GM18951 (cell line): ENCODE measurements at regions of chr15 and their contacts with region 1.

Region 1: DNA sequence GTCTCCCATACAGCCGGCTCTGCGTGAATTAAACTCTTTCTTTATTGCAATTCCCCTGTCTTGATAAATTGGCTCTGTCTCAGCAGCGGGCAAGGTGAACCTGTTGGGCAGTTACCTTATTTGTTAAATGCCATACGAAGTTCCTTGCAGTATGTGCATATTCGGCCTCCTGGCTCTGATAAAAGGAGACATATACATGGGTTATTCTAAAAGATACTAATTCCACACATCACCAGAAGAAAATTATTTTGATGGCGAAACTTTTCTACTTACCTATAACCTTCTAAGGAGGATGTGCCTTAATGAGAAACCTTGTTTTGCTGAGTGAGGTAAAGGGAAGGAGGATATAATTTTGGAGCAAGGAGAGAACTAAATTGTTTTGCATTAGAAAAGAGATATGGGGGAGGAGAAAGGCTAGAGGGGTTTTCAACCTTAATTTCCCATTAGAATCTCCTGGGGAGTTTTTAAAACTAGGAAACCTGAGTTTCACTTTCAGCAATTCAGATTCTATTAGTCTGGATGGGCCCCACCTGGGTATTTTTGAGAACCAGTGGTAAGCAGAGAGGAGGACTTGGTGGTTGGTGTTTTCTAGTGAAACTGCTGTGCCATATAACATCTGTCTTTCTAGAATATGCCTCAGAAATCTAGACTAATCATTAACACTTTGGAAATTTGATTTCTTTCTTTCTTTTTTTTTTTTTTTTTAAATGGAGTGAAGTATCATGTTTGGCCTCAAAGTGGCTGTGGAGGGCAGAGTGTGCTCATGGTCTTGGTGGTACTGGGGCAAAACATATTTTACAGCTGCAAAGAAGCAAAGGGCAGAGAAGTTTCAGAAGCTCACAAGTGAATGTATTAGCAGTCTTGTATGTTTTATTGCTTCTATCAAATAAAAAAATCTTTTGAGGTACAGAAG is 23.0 kb downstream of the NANOGP8 start:
- POLR2A ChIP-seq: no peak

Region 2: DNA sequence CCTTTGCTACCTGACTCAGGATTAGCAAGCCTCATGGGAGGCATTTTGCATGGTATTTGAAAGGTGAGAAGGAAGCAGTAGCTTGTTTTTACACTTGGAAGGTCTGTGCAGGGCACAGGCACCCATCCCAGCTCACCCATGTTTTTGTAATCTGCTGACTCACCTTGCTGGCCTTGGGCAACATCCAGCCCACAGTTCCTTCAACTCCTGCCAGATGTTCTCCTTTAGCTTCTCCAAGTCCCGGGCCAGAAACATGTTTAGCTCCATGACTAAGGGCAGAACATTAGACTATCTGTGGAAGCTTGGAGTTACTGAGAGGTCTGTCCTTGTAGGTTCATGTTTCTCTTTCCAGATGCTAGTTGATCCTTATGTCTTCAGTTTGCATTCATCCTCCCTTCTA is 61.6 kb before region 1 on chr15:
- in situ Hi-C with region 1: no loop called
- POLR2A ChIP-seq: no peak

Region 3: GRCh38 chr15:35019386-35020083 is 42.5 kb before region 1 on chr15:
- in situ Hi-C with region 1: no loop called
- POLR2A ChIP-seq: no peak

Region 4: DNA sequence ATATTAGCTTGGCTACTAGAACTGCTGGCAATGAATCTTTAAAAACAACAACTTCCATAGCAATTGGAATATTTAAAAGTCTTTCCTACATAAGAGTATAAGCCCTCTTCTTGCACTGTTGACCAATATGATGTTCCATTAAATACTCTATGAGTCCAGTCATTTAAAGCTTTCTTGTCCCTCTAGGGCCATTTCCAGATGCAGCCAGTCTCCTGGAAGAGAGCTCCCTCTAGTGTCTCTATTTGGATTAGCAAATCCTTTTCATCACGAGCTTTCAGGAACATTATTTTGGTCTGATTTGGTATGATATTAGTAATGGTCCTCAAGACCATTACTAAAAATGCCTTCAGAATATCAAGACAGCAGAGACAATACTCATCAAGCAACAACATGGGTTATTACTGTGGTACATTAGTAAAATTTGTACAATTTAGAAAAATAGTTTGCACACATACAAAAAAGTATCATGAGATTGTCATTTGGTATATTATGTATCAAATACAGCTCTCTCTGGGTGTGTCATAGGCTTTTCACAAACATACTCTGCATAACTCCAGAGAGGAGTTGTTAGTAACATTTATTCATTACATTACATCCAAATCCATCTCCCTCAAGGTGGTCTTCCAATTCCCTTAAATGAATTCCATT is 382.6 kb after region 1 on chr15:
- in situ Hi-C with region 1: loop called (anchors 10 kb)
- POLR2A ChIP-seq: no peak